ENCODE measurements at regions of chr1 and their contacts with region 1.

Region 1: DNA sequence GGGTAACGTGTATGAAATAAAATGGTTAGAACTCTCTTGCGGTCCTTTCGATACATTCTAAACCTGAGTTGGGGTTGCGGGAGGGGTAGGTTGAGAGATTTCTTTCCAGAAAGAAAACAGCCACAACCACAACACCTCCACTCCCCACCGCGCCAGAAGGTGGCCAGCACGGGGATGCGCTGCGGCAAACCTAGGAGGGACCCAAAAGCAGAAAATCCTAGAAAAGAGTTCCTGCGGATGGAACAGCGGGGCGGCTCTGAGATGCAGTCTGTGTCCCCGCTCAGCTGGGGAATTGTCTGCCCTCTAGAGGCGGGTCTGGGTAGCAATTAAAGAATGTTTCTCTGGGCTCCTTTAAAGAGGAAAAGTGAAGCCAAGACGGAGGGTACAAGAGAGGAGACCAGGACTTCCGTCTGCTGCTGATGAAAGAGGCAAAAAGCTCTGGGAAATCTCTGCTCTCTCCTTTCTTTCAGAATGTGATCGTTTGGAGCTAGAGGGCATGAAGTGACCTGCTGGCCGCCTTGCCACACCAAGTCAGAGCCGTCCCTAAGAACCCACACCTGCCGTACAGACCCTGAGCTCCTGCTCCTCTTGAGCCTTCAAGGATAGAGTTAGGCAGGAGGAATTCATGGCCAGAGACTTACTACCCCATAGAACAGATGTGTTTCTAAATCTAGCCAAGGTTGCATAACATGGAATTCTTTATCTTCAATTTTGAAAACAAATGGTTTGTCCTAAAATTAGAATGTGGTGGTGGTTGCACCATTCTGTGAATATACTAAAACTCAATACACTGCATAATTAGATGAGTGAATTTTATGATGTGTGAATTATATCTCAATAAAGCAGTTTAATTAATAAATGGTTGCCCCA is 46.5 kb upstream of the COA6 start:
- DNase-seq: peak; percentile 71 to 78 (median 75)
- ATAC-seq: peak; percentile 90
- H3K4me3 ChIP-seq: no peak overlapping the region
- H3K27ac ChIP-seq: no peak overlapping the region
- H3K4me1 ChIP-seq: no peaks in the 10 kb centered on the region; a peak in 3 of 5 replicates
- H3K27me3 ChIP-seq: peaks cover 17 to 27% of the 10 kb centered on the region in 2 experiments
- CTCF ChIP-seq: peak; percentile 83 to 94 (median 84)
- EP300 ChIP-seq: no peak
- POLR2A ChIP-seq: no peak
- RAD21 ChIP-seq: peak; percentile 47 to 67; a peak in 3 of 4 replicates

Region 2: DNA sequence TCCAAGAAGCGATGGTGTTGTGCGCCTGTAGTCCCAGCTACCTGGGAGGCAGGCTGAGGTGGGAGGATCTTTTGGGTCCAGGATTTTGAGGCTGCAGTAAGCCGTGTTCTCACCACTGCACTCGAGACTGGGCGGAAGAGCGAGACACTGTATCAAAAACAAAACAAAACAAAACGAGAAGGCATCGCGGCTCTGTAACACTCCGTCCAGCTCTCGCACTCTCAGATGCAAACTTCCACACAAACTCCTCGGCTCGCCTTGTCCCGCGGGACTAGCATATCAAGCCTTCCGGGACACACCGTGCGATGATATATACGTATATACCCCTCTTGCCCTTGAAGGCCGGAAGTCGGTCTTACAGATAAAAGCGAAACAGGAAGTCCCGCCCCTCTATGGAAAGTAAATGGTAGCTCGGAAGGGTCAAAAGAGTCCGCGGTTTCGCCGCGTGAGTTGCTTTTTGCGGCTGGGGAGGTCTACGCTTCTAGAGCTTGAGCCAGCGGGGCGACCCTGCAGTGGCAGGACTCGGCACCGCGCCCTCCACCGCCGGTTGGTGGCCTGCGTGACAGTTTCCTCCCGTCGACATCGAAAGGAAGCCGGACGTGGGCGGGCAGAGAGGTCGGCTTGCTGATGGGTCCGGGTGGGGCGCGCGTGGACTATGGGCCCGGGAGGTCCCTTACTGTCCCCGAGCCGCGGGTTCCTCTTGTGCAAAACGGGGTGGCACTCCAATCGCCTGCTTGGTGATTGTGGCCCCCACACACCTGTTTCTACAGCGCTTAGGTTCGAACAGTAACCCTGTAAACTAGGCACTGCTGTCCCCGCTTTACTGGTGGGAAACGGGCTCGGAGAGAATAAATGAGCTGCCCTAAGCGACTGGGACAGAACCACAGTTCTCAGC is 46.6 kb after region 1 on chr1 and contains the start of gene COA6:
- CTCF ChIA-PET with region 1: no interaction called
- POLR2A ChIA-PET with region 1: interaction called, 5 read pairs
- in situ Hi-C with region 1: no loop called
- intact Hi-C with region 1: loop called (anchors 2 kb)
- DNase-seq: peak; percentile 90 to 99 (median 92)
- ATAC-seq: peak; percentile 90
- H3K4me3 ChIP-seq: peak within 1 kb of the TSS; percentile 81
- H3K27ac ChIP-seq: peak within 1 kb of the TSS; percentile 93
- H3K4me1 ChIP-seq: peaks cover 5 to 36% of the 10 kb centered on the region in 2 experiments
- H3K27me3 ChIP-seq: no peaks in the 10 kb centered on the region
- CTCF ChIP-seq: no peak; a peak in 1 of 6 replicates
- EP300 ChIP-seq: peak; percentile 63
- POLR2A ChIP-seq: peak; percentile 100
- RAD21 ChIP-seq: peak in 1 of 2 experiments; percentile 20; a peak in 2 of 4 replicates
- polyA plus RNA-seq, gene COA6: 171 to 187 TPM

Region 3: DNA sequence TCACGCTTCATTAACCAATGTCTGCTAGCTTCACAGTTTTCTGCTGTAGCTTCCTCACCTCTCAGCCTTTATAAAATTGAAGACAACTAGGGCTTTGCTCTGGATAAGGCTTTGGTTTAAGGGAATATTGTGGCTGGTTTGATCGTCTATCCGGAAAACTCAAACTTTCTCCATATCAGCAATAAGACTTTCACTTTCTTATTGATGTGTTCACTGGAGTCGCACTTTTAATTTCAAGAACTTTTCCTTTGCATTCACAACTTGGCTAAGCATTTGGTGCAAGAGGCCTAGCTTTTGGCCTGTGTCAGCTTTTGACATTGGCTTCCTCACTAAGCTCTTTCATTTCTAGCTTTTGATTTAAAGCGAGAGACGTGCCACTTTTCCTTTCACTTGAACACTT is 59.4 kb after region 1 on chr1:
- CTCF ChIA-PET with region 1: no interaction called
- POLR2A ChIA-PET with region 1: no interaction called
- in situ Hi-C with region 1: no loop called
- intact Hi-C with region 1: no loop called
- DNase-seq: no peak
- ATAC-seq: no peak
- H3K4me3 ChIP-seq: no peak overlapping the region
- H3K27ac ChIP-seq: no peak overlapping the region
- H3K4me1 ChIP-seq: no peaks in the 10 kb centered on the region
- H3K27me3 ChIP-seq: no peaks in the 10 kb centered on the region
- CTCF ChIP-seq: no peak
- EP300 ChIP-seq: no peak
- POLR2A ChIP-seq: no peak
- RAD21 ChIP-seq: no peak

Region 4: GRCh38 chr1:234409328-234409727 is 82.6 kb after region 1 on chr1:
- CTCF ChIA-PET with region 1: interaction called, 14 read pairs
- POLR2A ChIA-PET with region 1: no interaction called
- in situ Hi-C with region 1: no loop called
- intact Hi-C with region 1: loop called (anchors 5 kb)
- DNase-seq: no peak
- ATAC-seq: no peak
- H3K4me3 ChIP-seq: no peak overlapping the region
- H3K27ac ChIP-seq: no peak overlapping the region
- H3K4me1 ChIP-seq: peaks cover 0 to 5% of the 10 kb centered on the region in 2 experiments; a peak in 1 of 5 replicates
- H3K27me3 ChIP-seq: no peaks in the 10 kb centered on the region
- CTCF ChIP-seq: peak in 1 of 3 experiments; percentile 42; a peak in 2 of 6 replicates
- EP300 ChIP-seq: no peak
- POLR2A ChIP-seq: no peak
- RAD21 ChIP-seq: peak; percentile 49 to 57

Region 5: GRCh38 chr1:234478481-234479309 is 152.0 kb after region 1 on chr1 and contains the start of gene TARBP1:
- CTCF ChIA-PET with region 1: no interaction called
- POLR2A ChIA-PET with region 1: no interaction called
- in situ Hi-C with region 1: loop called (anchors 5 kb)
- intact Hi-C with region 1: loop called (anchors 2 kb)
- DNase-seq: peak; percentile 84 to 95 (median 92)
- ATAC-seq: peak; percentile 85
- H3K4me3 ChIP-seq: peak within 1 kb of the TSS; percentile 73
- H3K27ac ChIP-seq: peak within 1 kb of the TSS; percentile 72
- H3K4me1 ChIP-seq: peaks cover 9 to 25% of the 10 kb centered on the region in 2 experiments; a peak in 4 of 5 replicates
- H3K27me3 ChIP-seq: peaks cover 0 to 5% of the 10 kb centered on the region in 2 experiments; a peak in 1 of 5 replicates
- CTCF ChIP-seq: peak; percentile 12 to 69 (median 41); a peak in 4 of 6 replicates
- EP300 ChIP-seq: no peak
- POLR2A ChIP-seq: peak; percentile 88
- RAD21 ChIP-seq: peak; percentile 21 to 56; a peak in 2 of 4 replicates
- polyA plus RNA-seq, gene TARBP1: 8.8 to 10.4 TPM

Region 6: DNA sequence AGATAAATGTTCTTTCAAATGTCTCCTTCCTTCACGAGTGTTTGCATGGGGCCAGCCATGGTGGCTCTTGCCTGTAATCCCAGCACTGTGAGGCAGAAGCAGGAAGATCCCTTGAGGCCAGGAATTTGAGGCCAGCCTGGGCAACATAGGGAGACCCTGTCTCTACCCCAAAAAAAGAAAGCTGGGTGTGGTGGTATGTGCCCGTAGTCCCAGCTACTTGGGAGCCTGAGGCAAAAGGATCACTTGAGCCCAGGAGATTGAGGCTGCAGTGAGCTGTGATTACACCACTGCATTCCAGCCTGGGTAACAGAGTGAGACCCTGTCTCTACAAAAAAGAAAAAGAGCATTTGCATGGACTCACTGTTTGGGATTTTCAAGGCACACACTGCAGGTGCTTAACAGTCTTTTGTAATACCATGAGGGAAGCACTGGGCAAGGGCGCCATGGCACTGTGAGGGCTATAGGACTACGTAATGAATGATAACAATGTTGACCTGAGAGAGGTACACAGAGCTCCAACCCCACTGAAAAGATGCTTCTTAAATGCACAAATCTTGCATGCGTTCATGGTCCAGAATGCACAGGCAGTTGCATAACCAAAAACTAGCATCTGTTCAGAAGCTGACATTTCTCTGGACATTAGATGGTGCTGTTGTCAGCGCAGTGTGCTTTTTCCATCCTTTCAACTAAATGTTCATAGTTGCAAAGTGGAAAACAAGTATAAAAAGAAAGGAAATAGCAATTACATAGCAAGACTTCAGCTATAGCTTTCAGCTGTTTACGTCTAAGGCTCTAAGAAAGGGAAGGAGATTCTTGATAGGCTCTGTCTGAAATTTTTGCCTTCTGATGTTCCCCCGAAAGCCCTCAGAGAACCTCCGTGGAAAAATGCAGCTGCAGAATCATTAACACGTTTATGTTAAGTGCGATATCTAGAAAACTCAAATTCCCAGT is 160.0 kb after region 1 on chr1:
- CTCF ChIA-PET with region 1: no interaction called
- POLR2A ChIA-PET with region 1: no interaction called
- in situ Hi-C with region 1: loop called (anchors 5 kb)
- intact Hi-C with region 1: no loop called
- DNase-seq: peak in 2 of 4 experiments; percentile 45 to 64
- ATAC-seq: peak; percentile 83
- H3K4me3 ChIP-seq: no peak overlapping the region
- H3K27ac ChIP-seq: no peak overlapping the region
- H3K4me1 ChIP-seq: peaks cover 0 to 15% of the 10 kb centered on the region in 2 experiments; a peak in 3 of 5 replicates
- H3K27me3 ChIP-seq: peaks cover 0 to 7% of the 10 kb centered on the region in 2 experiments; a peak in 1 of 5 replicates
- CTCF ChIP-seq: peak; percentile 67 to 84 (median 77)
- EP300 ChIP-seq: no peak
- POLR2A ChIP-seq: no peak
- RAD21 ChIP-seq: peak; percentile 89 to 95

Region 7: DNA sequence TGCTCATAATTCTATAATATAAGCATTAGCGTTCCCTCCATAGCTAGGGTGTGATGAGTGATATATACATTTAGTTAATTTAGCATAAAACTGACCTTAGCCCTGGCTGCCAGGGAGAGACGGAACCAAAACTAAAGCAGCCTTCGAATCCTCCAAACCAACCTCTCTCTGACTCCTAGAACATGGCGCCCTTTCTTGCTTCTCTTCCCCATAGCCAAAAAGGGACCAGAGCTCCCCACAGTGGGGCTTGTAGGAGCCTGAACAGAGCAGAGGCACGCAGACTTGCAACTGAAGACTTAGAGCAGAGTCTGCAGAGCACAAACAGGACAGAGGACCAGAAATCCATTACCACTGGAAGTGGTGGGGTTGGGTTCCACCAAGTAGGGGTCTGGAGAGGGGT is 265.5 kb after region 1 on chr1:
- CTCF ChIA-PET with region 1: no interaction called
- POLR2A ChIA-PET with region 1: no interaction called
- in situ Hi-C with region 1: loop called (anchors 10 kb)
- intact Hi-C with region 1: loop called (anchors 1 kb)
- DNase-seq: peak in 2 of 4 experiments; percentile 47 to 65
- ATAC-seq: peak; percentile 92
- H3K4me3 ChIP-seq: no peak overlapping the region
- H3K27ac ChIP-seq: no peak overlapping the region
- H3K4me1 ChIP-seq: peaks cover 2 to 3% of the 10 kb centered on the region in 2 experiments; a peak in 3 of 5 replicates
- H3K27me3 ChIP-seq: no peaks in the 10 kb centered on the region
- CTCF ChIP-seq: peak; percentile 53 to 69 (median 60); a peak in 5 of 6 replicates
- EP300 ChIP-seq: no peak
- POLR2A ChIP-seq: no peak
- RAD21 ChIP-seq: peak; percentile 86 to 97

Measured in K562 (cell line).